Stomach (tissue), 19 donors: ENCODE measurements at regions of chr21 and their contacts with region 1.

Region 1: DNA sequence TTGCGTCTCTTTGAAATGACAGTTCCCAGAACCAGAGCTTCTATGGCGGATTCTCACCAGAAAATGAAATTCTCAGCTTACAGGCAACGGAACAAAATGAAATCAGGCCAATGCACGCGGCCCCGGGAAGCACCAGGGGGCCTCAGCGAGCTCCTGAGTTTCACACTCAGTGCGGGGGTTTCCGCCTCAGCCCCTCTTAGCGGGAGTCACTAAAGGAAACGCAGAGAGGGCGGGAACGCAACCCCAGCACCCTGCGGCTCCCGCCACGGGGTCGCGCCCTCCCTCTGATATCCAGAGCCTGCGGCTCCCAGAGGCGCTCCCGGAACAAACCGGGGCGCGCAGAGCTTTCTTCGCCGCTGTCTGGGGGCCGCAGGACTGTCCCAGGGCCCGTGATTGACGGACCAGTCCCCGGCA is 7.9 kb upstream of the COL6A1 start:
- DNase-seq: peak; percentile 66 to 95
- H3K4me3 ChIP-seq: peak overlapping the region; percentile 48 to 59 (median 50)
- H3K27ac ChIP-seq: peak overlapping the region; percentile 88 to 92 (median 91)
- H3K4me1 ChIP-seq: peaks cover 46 to 75% (median 68%) of the 10 kb centered on the region in 4 donors
- H3K27me3 ChIP-seq: peaks cover 0 to 79% (median 53%) of the 10 kb centered on the region in 3 donors
- CTCF ChIP-seq: peak in 4 of 7 experiments; percentile 43 to 63 (median 56)
- EP300 ChIP-seq: no peak
- POLR2A ChIP-seq: no peak

Region 2: DNA sequence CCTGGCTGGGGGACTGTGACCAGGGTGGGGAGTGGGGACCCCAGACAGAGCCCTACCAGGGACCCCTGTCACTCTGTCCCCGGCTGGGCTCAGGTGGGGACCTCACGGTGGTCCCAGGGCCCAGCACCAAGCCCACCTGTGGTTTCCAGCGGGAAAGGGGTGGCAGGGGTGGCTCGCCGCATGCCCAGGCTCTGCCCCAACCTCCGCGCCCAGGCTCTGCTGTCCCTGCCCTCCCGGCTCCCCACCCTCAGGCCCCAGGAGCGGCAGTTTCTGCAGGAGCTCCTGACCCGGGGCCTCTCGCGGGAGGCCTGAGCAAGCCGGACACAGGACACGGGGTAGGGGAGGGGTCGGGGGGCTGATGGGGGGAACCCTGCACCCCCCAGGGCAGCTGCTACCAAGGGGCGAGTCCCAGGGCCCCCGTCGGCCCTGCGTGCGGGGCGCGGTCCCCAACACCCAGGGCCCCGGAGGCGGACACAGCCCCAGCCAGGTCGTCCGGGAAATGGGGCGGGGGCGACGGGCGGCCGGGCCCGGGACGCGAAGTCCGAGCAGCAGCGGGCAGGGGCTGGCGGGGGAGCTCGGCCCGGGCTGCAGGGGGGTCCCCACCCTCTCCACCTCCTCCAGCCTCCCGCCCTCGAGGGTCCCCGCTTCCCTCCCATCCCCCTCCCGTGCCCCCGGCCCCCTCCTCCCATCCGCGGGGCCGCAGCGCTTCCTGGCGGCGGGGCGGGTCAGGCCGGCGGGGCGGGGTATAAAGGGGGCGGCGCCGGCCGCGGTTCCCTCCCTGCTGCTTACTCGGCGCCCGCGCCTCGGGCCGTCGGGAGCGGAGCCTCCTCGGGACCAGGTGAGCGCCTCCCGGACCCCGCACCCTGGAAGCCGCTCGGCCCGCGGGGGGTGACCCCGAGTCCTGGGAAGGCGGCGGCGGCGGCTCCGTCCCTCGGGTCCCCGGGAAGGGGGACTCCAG is 123.9 kb after region 1 on chr21 and contains the start of gene COL6A2:
- intact Hi-C with region 1: loop called (anchors 5 kb)
- DNase-seq: peak; percentile 45 to 91
- H3K4me3 ChIP-seq: peak within 1 kb of the TSS; percentile 53 to 83 (median 71)
- H3K27ac ChIP-seq: peak within 1 kb of the TSS; percentile 59 to 96 (median 92)
- H3K4me1 ChIP-seq: peaks cover 14 to 53% (median 29%) of the 10 kb centered on the region in 4 donors
- H3K27me3 ChIP-seq: peaks cover 0 to 47% (median 21%) of the 10 kb centered on the region in 3 donors
- CTCF ChIP-seq: peak in 2 of 7 experiments; percentile 14 to 54
- EP300 ChIP-seq: no peak
- POLR2A ChIP-seq: no peak
- total RNA-seq, gene COL6A2: 351 to 3,737 (median 491) TPM